Prostate gland (tissue), 2 donors: ENCODE measurements at regions of chr10 and their contacts with region 1.

Region 1: DNA sequence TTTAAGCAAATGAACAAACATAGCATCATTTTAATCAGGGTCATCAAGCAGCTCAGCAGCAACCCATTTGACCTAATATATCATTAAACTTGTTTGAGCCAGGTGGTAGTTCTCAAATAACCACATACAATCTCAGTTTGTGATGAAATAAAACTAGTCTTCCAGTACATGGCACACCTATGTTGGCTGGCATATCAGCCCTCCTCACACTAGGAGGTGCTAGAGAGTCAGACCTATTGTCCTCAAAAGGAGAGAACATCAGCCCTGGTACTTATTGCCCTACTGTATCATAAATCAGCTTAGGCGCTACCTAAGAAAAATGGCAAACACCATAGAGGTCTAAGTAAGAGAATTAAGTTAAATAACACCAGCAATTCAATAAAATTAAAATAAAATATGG is 81.7 kb downstream of the CABCOCO1 start:
- DNase-seq: no peak
- H3K4me3 ChIP-seq: no peak overlapping the region
- H3K27ac ChIP-seq: no peak overlapping the region
- H3K4me1 ChIP-seq: no peaks in the 10 kb centered on the region
- H3K27me3 ChIP-seq: no peaks in the 10 kb centered on the region
- CTCF ChIP-seq: no peak
- POLR2A ChIP-seq: no peak

Region 2: DNA sequence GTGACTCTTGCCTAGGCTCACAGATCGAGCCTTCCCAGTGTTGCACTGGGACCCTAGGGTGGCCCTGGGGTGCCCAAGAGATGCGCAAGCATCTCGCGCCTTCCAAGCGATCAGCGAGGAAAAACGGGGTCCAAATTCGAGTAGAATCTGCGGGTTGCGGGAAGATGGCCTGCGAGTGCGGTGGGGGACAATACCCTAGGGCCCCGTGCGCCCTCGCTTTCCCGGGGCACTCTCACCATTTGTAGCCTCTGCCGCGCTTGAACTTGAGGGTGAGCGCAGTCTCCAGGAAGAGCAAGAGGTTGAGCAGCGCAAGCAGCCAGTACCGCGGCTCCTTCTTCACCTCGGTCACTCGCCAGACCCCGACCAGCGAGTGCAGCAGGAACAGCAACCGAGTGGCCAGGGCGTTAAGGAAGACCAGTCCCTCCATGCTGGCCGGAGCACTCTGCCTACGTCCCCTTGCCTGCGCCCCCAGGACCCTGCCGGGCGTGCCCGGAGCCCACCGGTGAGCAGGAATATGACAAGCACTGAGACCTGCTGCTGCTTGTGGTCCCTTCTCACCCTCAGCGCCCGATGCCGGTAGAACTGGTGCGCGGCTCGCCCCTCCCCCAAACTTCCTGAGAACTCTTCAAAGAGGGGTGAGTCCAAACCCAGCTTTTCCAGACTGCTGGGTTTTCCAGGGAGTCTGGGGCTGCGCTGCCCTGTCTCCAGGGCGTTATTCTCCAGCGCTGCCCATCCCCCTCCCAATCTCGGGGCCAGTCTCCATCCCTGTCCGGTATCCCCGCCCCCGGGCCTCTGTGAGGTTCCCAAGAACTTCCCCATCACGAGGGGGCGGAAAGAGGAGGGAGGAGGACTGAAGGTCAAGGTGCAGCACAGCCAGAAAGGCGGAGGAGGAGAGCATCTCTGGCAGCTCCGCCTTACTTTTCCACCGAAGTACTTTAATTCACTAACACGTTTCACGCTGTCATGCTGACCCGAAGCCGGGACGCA is 291.5 kb before region 1 on chr10 and contains the start of gene TMEM26:
- intact Hi-C with region 1: no loop called
- DNase-seq: peak; percentile 11
- H3K4me3 ChIP-seq: peak within 1 kb of the TSS; percentile 46 to 49
- H3K27ac ChIP-seq: peak within 1 kb of the TSS; percentile 48 to 68
- H3K4me1 ChIP-seq: no peaks in the 10 kb centered on the region
- H3K27me3 ChIP-seq: no peaks in the 10 kb centered on the region
- CTCF ChIP-seq: no peak
- POLR2A ChIP-seq: no peak
- total RNA-seq, gene TMEM26: 3.7 to 11.6 TPM

Region 3: GRCh38 chr10:61708846-61709245 is 35.6 kb before region 1 on chr10:
- intact Hi-C with region 1: no loop called
- DNase-seq: no peak
- H3K4me3 ChIP-seq: no peak overlapping the region
- H3K27ac ChIP-seq: no peak overlapping the region
- H3K4me1 ChIP-seq: no peaks in the 10 kb centered on the region
- H3K27me3 ChIP-seq: no peaks in the 10 kb centered on the region
- CTCF ChIP-seq: no peak
- POLR2A ChIP-seq: no peak

Region 4: DNA sequence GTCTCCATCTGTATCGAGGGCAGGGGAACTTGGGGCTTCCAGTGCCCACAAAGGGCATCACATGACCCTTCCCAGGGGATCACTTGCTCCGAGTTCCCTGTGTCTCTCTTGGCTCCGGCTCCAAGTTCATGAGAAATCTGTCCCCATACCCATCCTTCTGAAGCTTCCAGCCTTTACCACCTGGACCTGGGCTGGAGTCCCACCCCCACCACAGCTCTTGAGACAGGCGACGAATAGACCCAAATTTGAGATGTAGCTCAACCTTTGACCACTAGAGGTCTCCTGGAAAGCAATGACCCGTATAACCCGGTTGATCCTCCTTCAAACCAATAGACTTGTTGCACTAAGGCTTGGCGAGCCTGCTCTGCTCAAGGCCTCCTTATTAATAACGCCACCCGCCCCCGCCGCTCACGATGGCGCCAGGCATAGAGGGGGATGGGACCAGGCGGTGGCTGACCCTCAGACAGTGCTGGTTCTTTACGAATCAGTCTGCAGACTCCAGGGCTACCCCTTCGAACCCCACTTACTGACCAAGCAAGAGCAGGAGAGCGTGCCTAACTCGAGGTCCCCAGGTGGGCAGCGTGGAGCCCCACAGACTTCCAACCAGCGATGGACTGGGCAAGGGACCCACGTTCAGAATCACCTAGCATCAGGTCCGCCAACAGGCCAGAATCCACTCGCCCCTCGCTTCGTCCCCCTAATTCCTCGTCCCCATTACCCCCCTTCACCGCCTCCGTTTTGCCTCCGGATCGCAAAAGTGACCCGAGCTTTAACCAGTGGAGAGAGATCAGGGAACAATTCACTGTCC is 152.6 kb after region 1 on chr10:
- intact Hi-C with region 1: loop called (anchors 10 kb)
- DNase-seq: no peak
- H3K4me3 ChIP-seq: no peak overlapping the region
- H3K27ac ChIP-seq: peak overlapping the region in 1 of 2 donors; percentile 8
- H3K4me1 ChIP-seq: peaks cover 5% of the 10 kb centered on the region
- H3K27me3 ChIP-seq: no peaks in the 10 kb centered on the region
- CTCF ChIP-seq: peak; percentile 17 to 47 (median 40)
- POLR2A ChIP-seq: no peak

Region 5: DNA sequence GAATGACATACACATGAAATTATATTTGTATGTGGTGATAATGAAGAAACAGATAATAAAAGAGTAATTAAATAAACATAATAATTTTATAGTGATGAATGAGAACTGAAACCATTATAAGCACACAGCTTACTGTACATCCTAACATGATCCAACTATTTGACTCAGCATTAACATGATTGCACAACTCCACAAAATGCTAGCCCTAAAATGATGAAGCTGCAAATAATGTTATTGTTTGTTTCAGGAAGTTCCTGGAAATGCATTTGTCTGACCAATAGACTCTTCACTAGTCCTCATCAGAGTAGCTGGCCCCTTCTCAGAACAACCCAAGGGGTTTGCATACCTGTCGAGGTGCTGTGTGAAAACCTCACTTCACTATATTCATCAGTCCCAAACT is 408.7 kb after region 1 on chr10:
- intact Hi-C with region 1: no loop called
- DNase-seq: no peak
- H3K4me3 ChIP-seq: no peak overlapping the region
- H3K27ac ChIP-seq: no peak overlapping the region
- H3K4me1 ChIP-seq: no peaks in the 10 kb centered on the region
- H3K27me3 ChIP-seq: no peaks in the 10 kb centered on the region
- CTCF ChIP-seq: no peak
- POLR2A ChIP-seq: no peak